Sigmoid colon (tissue), 7 donors: ENCODE measurements at regions of chr7 and their contacts with region 1.

Region 1: GRCh38 chr7:150988230-150989226 is 2.3 kb upstream of the NOS3 start:
- DNase-seq: no peak
- H3K4me3 ChIP-seq: no peak overlapping the region
- H3K27ac ChIP-seq: peak overlapping the region; percentile 12 to 41 (median 30)
- H3K4me1 ChIP-seq: peaks cover 0 to 25% (median 19%) of the 10 kb centered on the region in 4 donors
- H3K27me3 ChIP-seq: no peaks in the 10 kb centered on the region
- CTCF ChIP-seq: peak; percentile 91 to 98 (median 97)
- EP300 ChIP-seq: no peak
- POLR2A ChIP-seq: no peak

Region 2: GRCh38 chr7:150898475-150899011 is 90.0 kb before region 1 on chr7:
- intact Hi-C with region 1: loop called (anchors 1 kb)
- DNase-seq: peak; percentile 91
- H3K4me3 ChIP-seq: no peak overlapping the region
- H3K27ac ChIP-seq: no peak overlapping the region
- H3K4me1 ChIP-seq: peaks cover 0 to 40% (median 32%) of the 10 kb centered on the region in 4 donors
- H3K27me3 ChIP-seq: no peaks in the 10 kb centered on the region
- CTCF ChIP-seq: peak; percentile 86 to 98 (median 94)
- EP300 ChIP-seq: no peak
- POLR2A ChIP-seq: no peak